ENCODE measurements at regions of chr3 and their contacts with region 1.

Region 1: GRCh38 chr3:192947421-192947820 is 29.8 kb upstream of the MB21D2 start:
- DNase-seq: no peak
- H3K4me3 ChIP-seq: no peak overlapping the region
- H3K27ac ChIP-seq: no peak overlapping the region
- H3K4me1 ChIP-seq: no peaks in the 10 kb centered on the region
- CTCF ChIP-seq: no peak

Region 2: DNA sequence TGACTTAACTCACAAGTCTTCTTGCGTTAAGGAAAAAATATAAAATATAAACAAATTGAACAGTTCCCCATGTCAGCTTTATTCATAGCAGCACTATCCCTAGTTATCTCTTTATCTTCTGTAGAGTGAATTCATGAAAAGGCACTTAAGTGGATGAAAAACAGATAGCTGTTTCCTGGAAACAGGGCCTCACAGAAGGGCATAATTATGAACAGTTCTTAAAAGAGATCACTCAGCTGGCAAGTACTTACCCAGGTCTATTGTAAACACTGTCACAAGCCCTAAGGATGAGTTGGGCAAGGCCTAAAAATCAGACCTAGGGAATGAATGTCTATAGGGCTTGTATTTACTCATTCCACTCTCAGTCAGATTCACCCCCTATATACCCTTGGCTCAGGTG is 40.5 kb before region 1 on chr3:
- CTCF ChIA-PET with region 1: no interaction called
- POLR2A ChIA-PET with region 1: interaction called, 23 read pairs
- intact Hi-C with region 1: no loop called
- DNase-seq: no peak
- H3K4me3 ChIP-seq: no peak overlapping the region
- H3K27ac ChIP-seq: no peak overlapping the region
- H3K4me1 ChIP-seq: no peaks in the 10 kb centered on the region
- CTCF ChIP-seq: no peak

Measured in OCI-LY7 (cell line).